Right cardiac atrium (tissue), 5 donors: ENCODE measurements at regions of chr21 and their contacts with region 1.

Region 1: DNA sequence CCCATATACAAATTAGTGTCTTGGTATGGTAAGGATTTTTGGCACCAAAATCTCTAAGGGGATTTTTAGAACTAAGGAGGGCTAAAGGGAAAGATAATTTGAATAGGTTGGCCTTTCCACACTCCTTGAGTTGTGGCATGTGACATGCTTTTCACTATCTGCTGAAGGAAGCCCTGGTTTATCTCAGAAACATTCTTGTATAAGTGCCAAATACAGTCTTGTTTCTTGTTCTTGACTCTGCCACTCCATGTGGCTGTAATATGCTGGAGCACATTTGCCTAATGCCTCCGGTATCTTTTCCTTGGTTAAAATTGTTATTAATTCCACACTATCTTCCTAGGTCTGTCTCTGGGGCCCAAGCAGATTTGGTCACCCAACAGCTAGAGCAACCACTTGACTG is 457.0 kb downstream of the USP25 start:
- DNase-seq: no peak
- ATAC-seq: peak; percentile 75 to 86
- H3K4me3 ChIP-seq: no peak overlapping the region
- H3K27ac ChIP-seq: no peak overlapping the region
- H3K4me1 ChIP-seq: no peaks in the 10 kb centered on the region
- H3K27me3 ChIP-seq: no peaks in the 10 kb centered on the region

Region 2: DNA sequence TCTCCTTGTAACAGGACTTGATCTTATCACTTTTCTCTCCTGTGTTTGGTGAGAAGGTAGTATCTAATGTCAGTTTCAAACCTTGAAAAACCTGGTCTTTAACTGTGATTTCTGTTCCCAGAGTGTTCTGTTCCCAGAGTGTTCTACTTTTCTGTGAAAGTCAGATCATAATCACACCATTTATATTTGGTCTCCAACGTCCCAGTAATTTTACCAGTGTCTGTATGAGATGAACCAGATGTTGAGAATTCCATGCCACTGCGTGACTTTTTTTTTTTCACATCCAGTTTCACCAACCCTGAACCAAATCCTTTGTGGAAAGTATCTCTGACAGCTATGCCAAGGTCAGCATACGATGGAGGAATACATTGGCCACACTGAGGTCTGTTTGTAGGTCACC is 91.7 kb before region 1 on chr21:
- intact Hi-C with region 1: loop called in 1 of 4 experiments (anchors 10 kb)
- DNase-seq: no peak
- ATAC-seq: no peak
- H3K4me3 ChIP-seq: no peak overlapping the region
- H3K27ac ChIP-seq: no peak overlapping the region
- H3K4me1 ChIP-seq: no peaks in the 10 kb centered on the region
- H3K27me3 ChIP-seq: no peaks in the 10 kb centered on the region